ENCODE measurements at regions of chr5 and their contacts with region 1.

Region 1: GRCh38 chr5:72486371-72486770 is 20.8 kb downstream of the ZNF366 start:
- DNase-seq: no peak
- H3K4me3 ChIP-seq: no peak overlapping the region
- H3K27ac ChIP-seq: no peak overlapping the region
- H3K4me1 ChIP-seq: no peaks in the 10 kb centered on the region
- CTCF ChIP-seq: no peak

Region 2: GRCh38 chr5:72402959-72403628 is 83.3 kb before region 1 on chr5:
- CTCF ChIA-PET with region 1: no interaction called
- POLR2A ChIA-PET with region 1: no interaction called
- intact Hi-C with region 1: loop called (anchors 10 kb)
- DNase-seq: no peak
- H3K4me3 ChIP-seq: no peak overlapping the region
- H3K27ac ChIP-seq: no peak overlapping the region
- H3K4me1 ChIP-seq: no peaks in the 10 kb centered on the region
- CTCF ChIP-seq: peak; percentile 67

Region 3: GRCh38 chr5:72783354-72783753 is 297.0 kb after region 1 on chr5:
- CTCF ChIA-PET with region 1: no interaction called
- POLR2A ChIA-PET with region 1: no interaction called
- intact Hi-C with region 1: no loop called
- DNase-seq: no peak
- H3K4me3 ChIP-seq: no peak overlapping the region
- H3K27ac ChIP-seq: no peak overlapping the region
- H3K4me1 ChIP-seq: no peaks in the 10 kb centered on the region
- CTCF ChIP-seq: no peak